ENCODE measurements at regions of chr2 and their contacts with region 1.

Region 1: DNA sequence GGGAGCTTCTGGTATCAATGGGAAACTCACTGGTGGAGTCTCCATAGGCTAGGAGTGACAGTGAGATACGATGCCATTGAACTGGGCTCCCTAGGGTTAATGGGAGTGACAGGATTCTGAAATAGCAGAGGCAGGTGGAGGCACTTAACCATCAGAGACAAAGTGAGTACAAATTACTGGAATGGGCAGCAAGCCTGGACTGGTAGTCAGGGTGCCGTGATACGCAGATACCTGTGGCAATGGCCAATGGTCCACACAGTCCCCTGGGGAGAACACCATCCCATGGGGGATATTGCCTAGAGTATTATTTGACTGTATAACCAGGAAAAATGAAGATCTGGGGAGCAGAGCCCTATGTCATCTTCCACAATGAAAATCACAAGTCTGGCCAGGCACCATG is 17.3 kb downstream of the CHCHD5 start:
- DNase-seq: no peak
- ATAC-seq: no peak
- H3K4me3 Mint-ChIP-seq: no peak overlapping the region
- H3K27ac Mint-ChIP-seq: no peak overlapping the region
- H3K4me1 Mint-ChIP-seq: peaks cover 5% of the 10 kb centered on the region
- H3K27me3 Mint-ChIP-seq: no peaks in the 10 kb centered on the region

Region 2: DNA sequence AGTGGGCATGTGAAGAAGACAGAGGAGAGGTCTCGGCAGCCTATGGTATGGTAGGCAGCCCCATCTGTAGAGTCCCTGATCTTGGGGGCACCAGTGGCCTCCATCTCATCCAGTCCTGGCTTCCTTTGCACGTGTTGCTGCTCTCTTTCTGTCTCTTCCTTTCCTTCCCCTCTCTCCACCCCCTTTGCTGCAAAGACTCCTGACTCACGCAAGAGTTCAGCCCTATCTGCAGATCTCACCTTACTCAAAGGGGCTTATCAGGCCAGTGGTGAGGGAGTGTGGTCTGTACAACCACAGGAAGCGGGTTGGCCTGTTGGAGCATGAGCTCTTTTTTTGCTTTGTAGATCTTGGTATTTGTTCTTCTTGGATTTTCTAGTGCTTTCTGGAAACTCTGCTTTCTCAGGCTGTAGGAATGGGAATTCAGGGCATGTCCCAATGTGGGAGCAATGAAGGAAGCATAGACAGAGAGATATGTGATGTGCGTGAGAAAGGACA is 104.5 kb after region 1 on chr2:
- CTCF ChIA-PET with region 1: interaction called, 17 read pairs
- POLR2A ChIA-PET with region 1: interaction called, 3 read pairs
- DNase-seq: peak; percentile 94
- ATAC-seq: peak; percentile 98
- H3K4me3 Mint-ChIP-seq: peak overlapping the region; percentile 58
- H3K27ac Mint-ChIP-seq: peak overlapping the region; percentile 71
- H3K4me1 Mint-ChIP-seq: peaks cover 41% of the 10 kb centered on the region
- H3K27me3 Mint-ChIP-seq: peaks cover 33% of the 10 kb centered on the region

Region 3: DNA sequence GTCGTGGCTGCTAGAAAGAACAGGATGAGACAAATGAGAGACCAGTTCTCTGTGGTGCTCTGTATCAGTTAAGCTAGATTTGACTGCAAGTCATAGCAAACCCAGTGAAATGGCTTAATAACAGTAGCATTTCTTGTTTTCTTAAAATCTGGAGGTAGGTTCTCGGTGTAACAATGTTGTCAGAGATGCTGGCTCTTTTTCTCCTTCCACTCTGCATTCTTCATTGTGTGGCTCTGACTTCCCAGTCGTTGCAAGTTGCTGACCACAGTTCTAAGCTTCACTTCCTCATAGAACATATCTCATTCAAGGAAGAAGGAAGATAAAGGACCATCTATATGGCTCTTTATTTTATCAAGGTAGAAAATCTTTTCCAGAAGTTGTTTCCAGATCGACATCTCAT is 170.6 kb after region 1 on chr2:
- CTCF ChIA-PET with region 1: no interaction called
- POLR2A ChIA-PET with region 1: no interaction called
- DNase-seq: no peak
- ATAC-seq: no peak
- H3K4me3 Mint-ChIP-seq: no peak overlapping the region
- H3K27ac Mint-ChIP-seq: no peak overlapping the region
- H3K4me1 Mint-ChIP-seq: peaks cover 29% of the 10 kb centered on the region
- H3K27me3 Mint-ChIP-seq: peaks cover 9% of the 10 kb centered on the region

Measured in activated CD8-positive, alpha-beta T cell treated with anti-CD3 and anti-CD28 coated beads, Interleukin-2, amount 10 ng/mL, durations not matched to agents 7 days and 5 days (primary cell).